ENCODE measurements at regions of chr3 and their contacts with region 1.

Region 1: DNA sequence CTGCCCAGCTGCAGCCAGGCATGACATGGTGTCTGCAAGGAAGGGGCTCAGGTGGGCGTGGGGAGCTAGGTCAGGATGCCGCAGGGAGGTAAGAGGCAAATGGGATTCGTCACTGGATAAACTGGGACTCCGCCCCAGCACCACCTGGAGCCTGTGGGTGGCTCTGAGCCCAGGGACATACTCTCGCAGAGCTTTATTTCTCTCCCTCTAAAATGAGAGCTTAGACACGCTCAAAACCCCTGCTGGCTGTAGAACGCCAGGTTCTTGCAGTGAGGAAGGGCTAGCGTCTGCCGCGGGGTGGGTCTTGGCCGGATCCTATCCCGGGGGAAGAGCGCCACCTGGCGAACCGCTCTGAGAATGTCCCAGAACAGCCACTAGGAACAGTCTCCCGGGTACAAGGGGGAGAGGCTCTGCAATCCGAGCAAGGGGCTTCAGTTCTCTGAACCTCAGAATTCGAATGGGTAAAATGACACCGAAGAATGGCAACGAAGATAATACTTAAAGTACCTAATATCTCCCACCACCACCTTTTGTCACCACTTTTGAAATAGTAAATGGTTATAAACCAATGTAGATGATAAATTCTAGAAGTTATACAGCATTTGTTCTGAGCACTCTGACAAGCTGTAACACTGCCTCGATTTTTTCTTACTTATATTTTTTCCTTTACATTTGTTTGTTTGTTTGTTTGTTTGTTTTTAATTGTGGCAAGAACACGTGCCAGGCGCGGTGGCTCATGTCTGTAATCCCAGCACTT is 53.2 kb upstream of the SRGAP3 start:
- DNase-seq: peak; percentile 87
- ATAC-seq: peak; percentile 97

Region 2: DNA sequence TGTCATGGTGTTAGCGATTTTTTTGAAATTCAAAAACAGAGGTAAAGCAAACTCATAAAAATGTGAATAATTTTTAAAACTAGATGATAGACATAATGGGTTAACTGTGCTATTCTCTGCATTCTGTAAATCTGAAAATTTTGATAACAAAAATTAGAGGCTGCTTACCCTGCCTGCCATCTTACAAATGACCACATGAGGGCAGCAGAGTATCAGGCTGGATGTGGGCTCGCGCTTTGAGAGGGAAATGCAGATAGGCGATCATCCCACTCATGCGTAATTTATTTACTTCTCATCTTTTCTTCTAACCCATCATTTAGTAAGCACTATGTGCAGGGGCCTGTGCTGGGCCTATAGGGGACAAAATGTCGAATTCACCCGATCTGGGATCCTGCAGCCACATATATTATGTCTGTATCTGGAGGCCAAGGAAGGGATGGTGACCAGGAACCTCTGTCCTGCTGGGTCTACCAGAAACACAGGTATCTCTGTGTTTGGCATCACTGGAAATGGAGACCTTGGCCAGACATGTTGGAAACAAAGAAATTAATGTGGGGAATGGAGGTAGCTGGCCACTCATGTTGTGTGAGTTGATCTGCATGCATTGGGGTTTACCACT is 331.5 kb before region 1 on chr3:
- intact Hi-C with region 1: loop called (anchors 2 kb)
- DNase-seq: no peak
- ATAC-seq: peak; percentile 69

Region 3: GRCh38 chr3:9067352-9067975 is 235.1 kb before region 1 on chr3:
- intact Hi-C with region 1: loop called (anchors 10 kb)
- DNase-seq: no peak
- ATAC-seq: peak; percentile 80

Region 4: GRCh38 chr3:9147215-9147895 is 155.2 kb before region 1 on chr3:
- intact Hi-C with region 1: no loop called
- DNase-seq: no peak
- ATAC-seq: no peak

Measured in left ventricle myocardium superior (tissue), 1 donor.